ENCODE measurements at regions of chr6 and their contacts with region 1.

Region 1: DNA sequence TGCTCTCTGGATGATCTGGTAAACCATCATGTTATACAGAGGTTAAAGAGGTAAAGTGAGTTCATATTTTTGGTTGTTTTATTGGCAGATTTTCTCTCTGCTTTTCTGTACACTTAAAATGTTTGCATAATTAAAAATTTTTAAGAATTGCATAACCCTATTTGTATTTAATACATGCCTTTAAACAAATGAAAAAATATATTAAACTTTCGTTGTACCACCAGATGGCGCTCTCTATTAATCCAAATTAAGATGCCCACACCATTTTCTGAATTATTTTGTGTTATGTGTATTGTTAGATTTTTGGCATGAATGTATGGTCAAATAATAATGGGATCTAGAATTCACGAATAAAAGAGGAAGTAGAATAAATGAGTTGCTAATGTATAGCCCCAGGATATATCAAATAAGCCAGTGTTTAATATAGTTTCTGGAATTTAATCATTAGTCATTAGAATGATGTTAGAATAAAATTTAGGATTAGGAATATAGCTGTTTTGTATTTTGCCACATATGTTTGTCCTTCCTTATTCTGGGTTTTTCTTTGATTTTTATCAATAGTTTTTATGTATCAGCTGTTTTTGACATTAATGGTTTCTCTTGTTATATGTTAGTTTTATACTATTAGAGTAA is 38.9 kb downstream of the SMAP1 start:
- DNase-seq: no peak
- H3K4me3 ChIP-seq: no peak overlapping the region
- H3K27ac ChIP-seq: no peak overlapping the region
- H3K4me1 ChIP-seq: peaks cover 0 to 11% (median under 1%) of the 10 kb centered on the region in 4 donors
- H3K27me3 ChIP-seq: no peaks in the 10 kb centered on the region
- CTCF ChIP-seq: peak; percentile 19 to 60 (median 28)
- EP300 ChIP-seq: no peak
- POLR2A ChIP-seq: no peak

Region 2: GRCh38 chr6:70667711-70668498 is 38.7 kb before region 1 on chr6 and contains the start of gene SMAP1:
- intact Hi-C with region 1: no loop called
- DNase-seq: peak; percentile 96
- H3K4me3 ChIP-seq: peak within 1 kb of the TSS; percentile 72 to 87 (median 80)
- H3K27ac ChIP-seq: peak within 1 kb of the TSS; percentile 90 to 95 (median 90)
- H3K4me1 ChIP-seq: peaks cover 0 to 26% (median 18%) of the 10 kb centered on the region in 4 donors
- H3K27me3 ChIP-seq: no peaks in the 10 kb centered on the region
- CTCF ChIP-seq: no peak
- EP300 ChIP-seq: peak in 1 of 4 donors; percentile 30
- POLR2A ChIP-seq: peak in 1 of 2 donors; percentile 38
- total RNA-seq, gene SMAP1: 19.7 to 34.3 (median 24.6) TPM

Region 3: DNA sequence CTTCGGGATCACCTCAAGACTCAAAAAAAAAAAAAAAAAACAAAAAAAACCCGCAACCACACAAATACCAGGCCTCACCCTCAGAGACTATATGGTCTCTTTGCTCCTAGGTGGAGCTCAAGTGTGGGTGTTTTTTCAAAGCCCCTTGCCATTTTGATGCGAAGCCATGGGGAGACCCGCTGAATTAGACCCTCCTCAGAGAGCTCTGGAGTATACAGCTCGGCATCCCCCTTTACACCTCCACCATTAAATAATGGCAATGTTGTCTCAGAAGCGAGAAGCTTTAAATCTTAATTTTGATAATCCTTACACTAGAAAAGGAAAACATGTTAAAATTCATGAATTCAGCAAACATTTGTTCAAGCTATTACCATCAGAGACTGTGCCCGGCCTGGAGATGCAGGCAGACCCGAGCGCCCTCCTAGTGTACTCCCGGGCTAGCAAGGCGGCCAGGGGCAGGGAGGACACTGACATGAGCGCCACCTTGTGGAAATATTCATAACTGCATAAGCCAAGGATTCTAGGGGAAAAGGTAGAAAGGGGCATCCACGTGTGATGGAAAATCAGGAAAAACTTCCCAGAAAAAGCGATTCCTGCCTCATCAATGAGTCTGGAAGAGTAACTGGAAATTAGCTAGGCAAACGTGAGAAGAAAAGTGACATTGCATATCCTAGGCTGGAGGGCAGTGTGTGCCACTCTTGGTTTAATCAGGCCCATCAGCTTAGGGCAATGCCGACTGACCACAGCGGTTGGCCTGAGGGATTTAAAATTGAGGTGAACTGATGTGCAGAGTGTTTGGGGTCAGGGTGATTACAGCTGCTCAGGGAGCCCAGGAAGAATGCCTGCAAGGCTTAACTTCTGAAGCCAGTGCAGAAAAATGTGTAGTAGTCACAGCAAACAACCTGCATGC is 177.7 kb after region 1 on chr6:
- intact Hi-C with region 1: loop called (anchors 1 kb)
- DNase-seq: peak; percentile 69
- H3K4me3 ChIP-seq: no peak overlapping the region
- H3K27ac ChIP-seq: no peak overlapping the region
- H3K4me1 ChIP-seq: no peaks in the 10 kb centered on the region
- H3K27me3 ChIP-seq: no peaks in the 10 kb centered on the region
- CTCF ChIP-seq: peak; percentile 64 to 91 (median 85)
- EP300 ChIP-seq: no peak
- POLR2A ChIP-seq: no peak

Region 4: GRCh38 chr6:70955441-70956190 is 249.0 kb after region 1 on chr6:
- intact Hi-C with region 1: loop called (anchors 10 kb)
- DNase-seq: peak; percentile 81
- H3K4me3 ChIP-seq: peak overlapping the region; percentile 30 to 58 (median 46)
- H3K27ac ChIP-seq: no peak overlapping the region
- H3K4me1 ChIP-seq: peaks cover 0 to 25% (median 23%) of the 10 kb centered on the region in 4 donors
- H3K27me3 ChIP-seq: peaks cover 10 to 46% (median 19%) of the 10 kb centered on the region in 3 donors
- CTCF ChIP-seq: peak; percentile 35 to 80 (median 58)
- EP300 ChIP-seq: no peak
- POLR2A ChIP-seq: no peak